Activated CD4-positive, alpha-beta memory T cell treated with anti-CD3 and anti-CD28 coated beads for 36 hours (primary cell): ENCODE measurements at regions of chrX and their contacts with region 1.

Region 1: DNA sequence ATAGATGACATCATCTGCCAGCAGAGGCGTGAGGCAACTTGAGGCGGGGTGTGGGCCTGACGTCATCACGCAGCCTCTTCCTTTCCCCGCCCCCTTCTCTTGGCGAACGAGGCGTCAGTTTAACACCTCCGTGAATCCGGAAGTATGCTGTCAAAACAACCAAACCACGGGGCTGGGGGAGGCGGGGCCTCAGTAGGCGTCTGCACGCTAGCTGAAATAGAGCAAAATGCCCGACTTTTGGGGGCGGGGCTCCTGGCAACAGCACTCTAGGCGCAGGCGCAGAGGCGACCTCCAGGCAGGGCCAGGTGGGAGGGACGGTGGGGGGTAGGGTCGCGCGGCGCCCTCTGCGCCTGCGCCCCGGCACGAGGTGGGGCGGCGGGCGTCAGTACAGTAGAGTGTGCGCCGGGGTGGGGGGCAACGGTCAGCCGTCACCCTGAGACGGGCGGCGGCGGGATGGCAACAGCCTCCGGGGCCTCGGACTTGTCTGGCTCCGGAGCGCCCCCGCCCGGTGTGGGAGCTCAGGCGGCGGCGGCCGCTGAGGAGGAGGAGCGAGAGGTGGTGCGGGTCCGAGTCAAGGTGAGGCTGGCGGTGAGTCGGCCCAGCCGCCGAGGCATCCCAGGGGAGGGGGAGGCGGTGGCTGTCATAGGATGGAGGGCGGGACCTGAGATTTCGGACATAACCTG is at the start of gene TBC1D25:
- DNase-seq: peak; percentile 98
- H3K4me3 Mint-ChIP-seq: peak within 1 kb of the TSS; percentile 84
- H3K27ac Mint-ChIP-seq: peak within 1 kb of the TSS; percentile 97
- H3K4me1 Mint-ChIP-seq: peaks cover 19% of the 10 kb centered on the region
- H3K27me3 Mint-ChIP-seq: no peaks in the 10 kb centered on the region
- total RNA-seq, gene TBC1D25: 13.5 to 16.2 TPM

Region 2: DNA sequence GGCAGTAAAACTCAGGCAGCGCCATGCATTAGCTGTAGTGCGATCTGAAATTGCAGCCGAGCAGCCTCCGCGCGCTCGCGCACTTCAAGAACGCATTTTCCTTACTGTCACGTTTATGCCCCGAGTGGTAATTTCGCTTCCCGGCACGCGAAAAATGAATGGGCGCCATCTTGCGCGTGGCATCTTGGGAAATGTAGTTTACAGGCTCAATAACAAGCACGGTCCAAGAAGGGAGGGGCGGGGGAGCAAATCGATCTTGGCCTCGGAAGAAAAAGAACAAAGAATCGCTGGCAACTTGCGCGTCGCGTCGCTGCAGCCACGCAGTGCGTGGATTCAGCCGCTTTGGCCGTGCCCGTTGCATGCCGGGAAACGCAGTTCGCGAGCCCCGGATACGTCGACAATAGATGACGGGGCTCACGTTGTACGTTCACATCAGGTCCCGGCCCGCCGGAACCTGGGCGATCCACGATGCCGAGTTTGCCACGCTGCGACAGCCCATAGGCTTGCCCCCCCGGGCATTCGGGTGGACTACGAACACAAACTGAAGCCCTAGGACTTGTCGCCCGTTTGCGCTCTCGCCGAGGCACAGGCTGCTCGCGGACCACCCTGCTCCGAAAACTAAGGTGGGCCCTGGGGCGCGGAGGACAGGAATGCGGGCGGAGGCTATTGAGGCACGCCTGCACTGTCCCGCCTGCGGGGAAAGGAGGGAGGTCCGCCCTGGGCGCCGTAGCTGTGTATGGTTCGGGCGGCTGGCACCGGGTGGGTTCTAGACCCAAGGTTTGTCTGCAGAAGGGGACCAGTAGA is 63.5 kb before region 1 on chrX and contains the start of gene FTSJ1:
- CTCF ChIA-PET with region 1: interaction called, 5 read pairs
- POLR2A ChIA-PET with region 1: no interaction called
- intact Hi-C with region 1: loop called (anchors 1 kb)
- DNase-seq: peak; percentile 90
- H3K4me3 Mint-ChIP-seq: peak within 1 kb of the TSS; percentile 94
- H3K27ac Mint-ChIP-seq: peak within 1 kb of the TSS; percentile 93
- H3K4me1 Mint-ChIP-seq: peaks cover 33% of the 10 kb centered on the region
- H3K27me3 Mint-ChIP-seq: no peaks in the 10 kb centered on the region
- total RNA-seq, gene FTSJ1: 62.8 to 73.9 TPM

Region 3: GRCh38 chrX:48521353-48522243 is 17.9 kb before region 1 on chrX and contains the start of gene EBP:
- CTCF ChIA-PET with region 1: no interaction called
- POLR2A ChIA-PET with region 1: interaction called, 3 read pairs
- intact Hi-C with region 1: loop called (anchors 1 kb)
- DNase-seq: peak; percentile 97
- H3K4me3 Mint-ChIP-seq: peak within 1 kb of the TSS; percentile 92
- H3K27ac Mint-ChIP-seq: peak within 1 kb of the TSS; percentile 98
- H3K4me1 Mint-ChIP-seq: peaks cover 27% of the 10 kb centered on the region
- H3K27me3 Mint-ChIP-seq: no peaks in the 10 kb centered on the region
- total RNA-seq, gene EBP: 149 to 150 TPM

Region 4: DNA sequence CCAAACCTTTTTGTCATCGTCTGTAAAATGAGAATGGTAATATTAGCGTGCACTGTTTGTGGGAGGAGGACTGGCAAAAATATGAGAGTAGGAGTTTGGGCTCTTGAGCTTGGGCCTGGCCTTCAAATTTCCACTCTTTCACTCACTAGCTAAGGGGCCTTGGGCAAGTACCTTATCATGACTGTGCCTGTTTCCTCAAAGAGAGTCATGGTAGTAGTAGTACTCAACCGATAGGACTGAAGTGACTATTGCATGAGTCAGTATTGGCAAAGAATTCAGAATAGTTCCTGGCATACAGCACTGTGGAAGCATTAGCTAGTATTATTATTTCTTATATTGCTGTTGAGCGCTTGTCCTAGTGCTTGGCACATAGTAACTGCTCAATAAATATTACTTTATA is 18.8 kb after region 1 on chrX:
- CTCF ChIA-PET with region 1: no interaction called
- POLR2A ChIA-PET with region 1: interaction called, 4 read pairs
- intact Hi-C with region 1: loop called (anchors 1 kb)
- DNase-seq: peak; percentile 16
- H3K4me3 Mint-ChIP-seq: no peak overlapping the region
- H3K27ac Mint-ChIP-seq: peak overlapping the region; percentile 86
- H3K4me1 Mint-ChIP-seq: peaks cover 2% of the 10 kb centered on the region
- H3K27me3 Mint-ChIP-seq: no peaks in the 10 kb centered on the region

Region 5: GRCh38 chrX:48782795-48783194 is 243.3 kb after region 1 on chrX:
- CTCF ChIA-PET with region 1: no interaction called
- POLR2A ChIA-PET with region 1: no interaction called
- intact Hi-C with region 1: no loop called
- DNase-seq: no peak
- H3K4me3 Mint-ChIP-seq: no peak overlapping the region
- H3K27ac Mint-ChIP-seq: no peak overlapping the region
- H3K4me1 Mint-ChIP-seq: no peaks in the 10 kb centered on the region
- H3K27me3 Mint-ChIP-seq: no peaks in the 10 kb centered on the region